Activated CD8-positive, alpha-beta T cell treated with anti-CD3 and anti-CD28 coated beads for 36 hours (primary cell): ENCODE measurements at regions of chr16 and their contacts with region 1.

Region 1: DNA sequence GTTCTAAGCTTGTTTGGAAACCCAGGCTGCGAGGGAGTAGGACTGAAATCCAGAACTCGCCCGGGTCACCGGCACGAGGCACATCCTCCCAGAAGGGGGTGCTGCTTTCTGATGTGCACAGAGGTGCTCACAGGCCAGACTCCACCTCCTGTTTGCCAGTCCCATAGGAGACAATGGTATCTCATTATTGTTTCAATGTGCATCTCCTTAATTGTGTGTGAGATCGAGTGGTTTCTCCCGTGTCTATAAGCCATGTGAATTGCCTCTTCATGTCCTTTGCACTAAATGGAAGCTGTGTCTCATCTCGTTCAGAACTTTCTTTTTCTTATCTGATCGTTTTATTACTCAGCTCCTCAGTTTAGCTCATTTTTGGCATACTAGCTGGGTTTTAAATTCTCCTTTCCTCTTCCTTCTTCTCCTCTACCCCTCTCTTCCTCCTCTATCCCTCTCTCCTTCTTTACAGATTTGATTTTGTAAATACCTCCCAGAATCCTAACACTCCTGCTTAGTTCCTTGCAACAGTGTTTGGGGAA is 32.1 kb upstream of the PRKCB start:
- DNase-seq: peak; percentile 84
- ATAC-seq: peak; percentile 92
- H3K4me3 Mint-ChIP-seq: peak overlapping the region; percentile 3
- H3K27ac Mint-ChIP-seq: peak overlapping the region; percentile 1
- H3K4me1 Mint-ChIP-seq: peaks cover 14% of the 10 kb centered on the region
- H3K27me3 Mint-ChIP-seq: no peaks in the 10 kb centered on the region
- CTCF ChIP-seq: peak; percentile 75

Region 2: DNA sequence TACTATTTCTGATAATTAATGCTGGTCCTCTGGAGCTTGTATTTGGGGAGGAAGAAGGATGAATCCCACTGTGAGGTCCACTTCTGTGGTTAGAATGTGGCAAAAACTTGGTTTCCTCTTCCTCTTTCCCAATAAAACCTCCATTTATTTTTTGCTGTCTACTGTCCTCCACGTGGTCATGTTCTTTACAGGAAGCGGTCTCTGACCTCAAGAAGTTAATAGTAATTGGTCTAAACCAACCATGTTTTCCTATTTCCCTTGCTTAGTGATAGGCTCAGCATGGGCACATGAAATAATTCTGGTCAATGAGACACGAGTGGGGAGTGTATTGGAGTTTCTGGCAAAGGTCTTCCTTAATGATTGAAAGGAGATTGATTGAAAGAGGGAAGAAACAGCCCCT is 15.0 kb before region 1 on chr16:
- CTCF ChIA-PET with region 1: interaction called, 10 read pairs
- POLR2A ChIA-PET with region 1: no interaction called
- intact Hi-C with region 1: no loop called
- DNase-seq: no peak
- ATAC-seq: no peak
- H3K4me3 Mint-ChIP-seq: no peak overlapping the region
- H3K27ac Mint-ChIP-seq: no peak overlapping the region
- H3K4me1 Mint-ChIP-seq: no peaks in the 10 kb centered on the region
- H3K27me3 Mint-ChIP-seq: no peaks in the 10 kb centered on the region
- CTCF ChIP-seq: no peak

Region 3: GRCh38 chr16:23842137-23842600 is 38.5 kb after region 1 on chr16:
- CTCF ChIA-PET with region 1: interaction called, 11 read pairs
- POLR2A ChIA-PET with region 1: interaction called, 4 read pairs
- intact Hi-C with region 1: no loop called
- DNase-seq: peak; percentile 81
- ATAC-seq: peak; percentile 88
- H3K4me3 Mint-ChIP-seq: peak overlapping the region; percentile 34
- H3K27ac Mint-ChIP-seq: peak overlapping the region; percentile 92
- H3K4me1 Mint-ChIP-seq: peaks cover 82% of the 10 kb centered on the region
- H3K27me3 Mint-ChIP-seq: no peaks in the 10 kb centered on the region
- CTCF ChIP-seq: no peak

Region 4: GRCh38 chr16:24036614-24037013 is 233.0 kb after region 1 on chr16:
- CTCF ChIA-PET with region 1: interaction called, 144 read pairs
- POLR2A ChIA-PET with region 1: no interaction called
- intact Hi-C with region 1: loop called (anchors 1 kb)
- DNase-seq: peak; percentile 46
- ATAC-seq: peak; percentile 60
- H3K4me3 Mint-ChIP-seq: no peak overlapping the region
- H3K27ac Mint-ChIP-seq: peak overlapping the region; percentile 7
- H3K4me1 Mint-ChIP-seq: peaks cover 41% of the 10 kb centered on the region
- H3K27me3 Mint-ChIP-seq: no peaks in the 10 kb centered on the region
- CTCF ChIP-seq: peak; percentile 81

Region 5: DNA sequence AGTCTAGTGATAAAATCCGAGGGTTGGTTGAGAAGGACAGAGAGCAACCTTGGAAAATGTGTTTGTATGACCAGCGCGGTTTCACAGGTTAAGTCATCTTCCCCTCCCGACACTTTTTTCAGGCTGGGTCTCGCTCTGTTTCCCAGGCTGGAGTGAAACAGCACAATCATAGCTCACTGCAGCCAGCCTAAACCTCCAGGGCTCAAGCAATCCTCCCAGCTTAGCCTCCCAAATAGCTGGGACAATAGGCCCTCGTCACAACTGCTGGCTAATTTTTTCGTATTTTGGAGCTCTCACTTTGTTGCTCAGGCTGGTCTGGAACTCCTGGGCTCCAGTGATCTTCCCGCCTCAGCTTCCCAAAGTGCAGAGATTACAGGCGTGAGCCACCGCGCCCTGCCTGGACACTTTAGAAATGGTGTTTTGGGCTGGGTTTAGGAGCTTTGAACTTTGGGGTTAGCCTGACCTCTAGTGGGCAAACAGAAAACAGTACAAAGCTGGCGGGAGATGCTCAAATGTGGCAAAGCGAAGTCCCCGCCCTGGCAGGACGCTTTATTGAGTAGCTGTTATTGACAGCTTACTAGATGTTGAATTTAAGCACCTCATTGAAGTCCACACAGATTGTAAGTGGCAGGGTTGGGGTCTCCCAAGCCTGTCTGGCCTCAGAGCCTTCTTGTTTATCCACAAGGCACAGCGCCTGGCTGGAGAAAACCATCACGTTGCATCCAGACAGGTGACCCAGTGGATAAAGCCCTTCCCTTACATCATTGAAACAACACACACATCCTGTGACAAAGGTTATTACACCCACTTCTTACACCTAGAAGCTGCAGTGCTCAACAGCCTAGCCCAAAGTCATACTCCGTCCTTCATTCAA is 701.1 kb after region 1 on chr16:
- CTCF ChIA-PET with region 1: interaction called, 11 read pairs
- POLR2A ChIA-PET with region 1: no interaction called
- intact Hi-C with region 1: no loop called
- DNase-seq: peak; percentile 66
- ATAC-seq: peak; percentile 88
- H3K4me3 Mint-ChIP-seq: no peak overlapping the region
- H3K27ac Mint-ChIP-seq: no peak overlapping the region
- H3K4me1 Mint-ChIP-seq: no peaks in the 10 kb centered on the region
- H3K27me3 Mint-ChIP-seq: peaks cover 10% of the 10 kb centered on the region
- CTCF ChIP-seq: peak; percentile 76